ENCODE measurements at regions of chr2 and their contacts with region 1.

Region 1: DNA sequence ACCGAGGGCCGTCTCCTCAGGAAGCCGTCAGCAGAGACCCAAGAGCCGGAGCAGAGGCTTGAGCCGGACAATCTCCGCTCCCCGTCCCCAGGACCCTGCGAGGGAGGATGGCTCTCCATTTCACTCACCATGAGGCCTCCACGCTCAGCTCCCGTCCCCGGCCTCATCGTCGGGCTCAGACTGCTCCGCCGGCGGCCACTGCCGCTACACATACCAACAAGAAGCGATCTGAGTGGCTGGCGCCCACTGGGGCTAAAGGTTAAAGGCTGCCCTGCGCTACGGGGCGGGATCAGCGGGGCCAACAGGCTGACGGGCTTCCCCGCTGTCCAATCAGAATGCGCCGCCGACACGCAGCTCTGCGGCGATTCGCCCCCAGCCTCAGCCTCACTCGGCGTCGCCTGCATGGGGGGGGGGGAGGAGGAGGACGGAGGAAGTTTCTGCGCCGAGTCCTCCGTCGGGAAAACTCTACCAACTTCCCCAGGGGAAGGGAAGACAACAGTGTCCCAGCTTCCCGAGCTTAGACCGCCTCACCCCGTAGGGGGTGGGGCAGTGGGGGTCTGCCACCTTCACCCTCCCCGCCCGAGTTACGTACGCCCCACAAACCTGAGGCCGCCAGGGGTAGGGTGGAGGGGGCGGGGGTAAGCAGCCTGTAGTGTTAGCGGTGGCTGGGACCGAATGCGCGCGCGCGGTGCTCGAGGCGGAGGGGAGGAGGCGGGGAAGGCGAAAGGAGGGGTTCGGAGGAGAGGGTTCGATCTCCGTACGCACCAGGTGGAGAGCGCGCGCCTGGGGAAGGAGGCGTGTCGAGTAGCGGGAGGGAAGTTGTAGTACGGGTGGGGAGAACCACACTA is at the start of gene PRPF40A:
- DNase-seq: peak; percentile 98
- H3K4me3 ChIP-seq: peak within 1 kb of the TSS; percentile 79 to 87
- H3K27ac ChIP-seq: peak within 1 kb of the TSS; percentile 97 to 98
- H3K4me1 ChIP-seq: no peaks in the 10 kb centered on the region
- H3K27me3 ChIP-seq: no peaks in the 10 kb centered on the region
- CTCF ChIP-seq: peak in 2 of 4 experiments; percentile 31 to 46
- POLR2A ChIP-seq: peak; percentile 65
- total RNA-seq, gene PRPF40A: 82.6 to 97.9 TPM

Region 2: DNA sequence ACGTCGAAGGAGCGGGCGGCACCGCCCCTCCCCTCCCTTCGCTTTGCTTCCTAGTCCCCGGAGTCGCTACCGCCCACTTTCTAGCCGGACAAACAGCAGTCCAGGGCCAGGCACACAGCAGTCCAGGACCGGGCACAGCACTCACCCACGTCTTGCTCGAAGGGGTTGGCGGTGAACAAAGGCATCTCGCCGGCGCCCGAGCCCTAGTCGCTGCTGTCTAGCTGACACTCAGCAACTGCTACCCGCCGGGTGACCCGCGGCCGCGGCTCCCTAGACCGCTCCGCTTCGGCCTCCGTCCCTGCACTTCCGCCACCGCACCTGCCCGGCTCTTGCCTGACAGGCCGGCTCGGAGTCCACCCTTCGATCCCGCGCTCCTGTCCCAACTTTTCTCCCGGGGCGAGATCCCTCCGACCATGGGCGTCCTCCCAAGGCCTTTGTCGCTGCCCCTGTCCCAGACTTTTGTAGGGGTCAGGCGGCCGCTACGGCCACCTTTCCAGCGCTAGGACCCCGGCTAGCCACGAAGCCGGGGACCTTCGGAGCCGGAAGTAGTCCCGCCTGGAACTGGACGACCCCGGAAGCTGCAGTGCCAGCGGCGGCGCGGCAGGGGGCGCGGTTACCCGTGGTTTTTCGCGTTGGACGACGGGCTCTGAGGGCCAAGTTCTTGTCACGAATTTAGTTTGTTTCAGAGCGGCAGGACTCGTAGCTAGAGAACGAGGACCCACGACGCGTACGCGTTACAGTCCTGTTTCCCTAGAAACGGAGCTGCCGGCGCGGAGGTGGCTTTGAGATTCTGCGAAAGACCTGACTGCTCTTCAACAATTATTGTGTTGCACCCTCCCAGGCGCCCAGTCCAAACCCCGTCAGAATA is 541.8 kb before region 1 on chr2 and contains the start of gene STAM2:
- intact Hi-C with region 1: loop called (anchors 10 kb)
- DNase-seq: peak; percentile 92
- H3K4me3 ChIP-seq: peak within 1 kb of the TSS; percentile 67 to 75
- H3K27ac ChIP-seq: peak within 1 kb of the TSS; percentile 97
- H3K4me1 ChIP-seq: no peaks in the 10 kb centered on the region
- H3K27me3 ChIP-seq: no peaks in the 10 kb centered on the region
- CTCF ChIP-seq: peak; percentile 93 to 98 (median 96)
- POLR2A ChIP-seq: peak; percentile 82
- total RNA-seq, gene STAM2: 28.7 to 39.3 TPM

Region 3: DNA sequence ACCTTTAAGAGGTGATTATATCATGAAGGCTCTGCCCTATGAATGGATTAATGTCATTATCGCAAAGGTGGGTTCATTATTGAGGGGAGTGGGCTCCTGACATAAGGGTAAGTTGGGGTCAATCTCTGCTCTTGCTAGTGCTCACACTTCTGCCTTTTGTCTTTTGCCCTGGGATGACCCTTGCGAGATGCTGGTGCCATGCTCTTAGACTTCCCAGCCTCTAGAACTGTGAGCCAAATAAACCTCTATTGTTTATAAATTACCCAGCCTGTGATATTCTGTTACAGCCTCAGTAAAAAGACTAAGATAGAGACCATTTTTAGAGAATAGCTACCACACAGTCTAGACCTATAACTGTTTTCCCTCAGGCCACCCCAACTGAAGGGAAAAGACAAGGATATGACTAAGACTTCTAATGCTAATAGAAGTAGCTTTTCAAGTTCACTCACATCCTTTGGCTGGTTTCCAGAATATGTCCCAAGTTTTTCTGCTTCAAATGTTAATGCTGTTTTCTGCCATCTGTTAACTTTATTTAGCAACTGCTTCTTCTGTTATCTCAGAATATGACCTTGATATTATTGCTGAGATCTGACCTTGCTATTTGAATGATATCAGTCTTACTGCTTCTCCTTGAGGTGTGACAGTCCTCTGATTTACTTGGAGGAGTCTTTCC is 476.8 kb before region 1 on chr2:
- intact Hi-C with region 1: no loop called
- DNase-seq: no peak
- H3K4me3 ChIP-seq: no peak overlapping the region
- H3K27ac ChIP-seq: no peak overlapping the region
- H3K4me1 ChIP-seq: no peaks in the 10 kb centered on the region
- H3K27me3 ChIP-seq: no peaks in the 10 kb centered on the region
- CTCF ChIP-seq: no peak
- POLR2A ChIP-seq: no peak

Region 4: DNA sequence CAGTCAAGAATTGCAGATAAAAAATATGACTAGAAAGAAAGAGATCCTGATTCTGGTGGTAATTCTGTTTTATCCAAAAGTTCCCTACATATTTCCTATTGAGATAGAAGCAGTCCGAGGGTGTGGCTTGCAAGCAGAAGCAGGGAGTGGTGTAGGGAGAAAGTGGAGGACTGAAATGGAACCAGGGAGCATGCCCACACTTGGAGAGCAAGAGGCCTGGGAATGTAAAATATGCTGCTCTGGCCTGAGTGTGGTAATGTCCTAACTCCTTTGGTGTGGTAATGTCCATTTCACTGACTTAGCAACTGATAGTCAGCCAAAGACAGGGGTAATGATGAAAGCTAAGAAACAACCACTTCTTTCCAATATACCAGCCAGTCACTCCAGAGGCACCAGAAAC is 412.6 kb before region 1 on chr2:
- intact Hi-C with region 1: no loop called
- DNase-seq: no peak
- H3K4me3 ChIP-seq: no peak overlapping the region
- H3K27ac ChIP-seq: no peak overlapping the region
- H3K4me1 ChIP-seq: no peaks in the 10 kb centered on the region
- H3K27me3 ChIP-seq: no peaks in the 10 kb centered on the region
- CTCF ChIP-seq: no peak
- POLR2A ChIP-seq: no peak

Region 5: DNA sequence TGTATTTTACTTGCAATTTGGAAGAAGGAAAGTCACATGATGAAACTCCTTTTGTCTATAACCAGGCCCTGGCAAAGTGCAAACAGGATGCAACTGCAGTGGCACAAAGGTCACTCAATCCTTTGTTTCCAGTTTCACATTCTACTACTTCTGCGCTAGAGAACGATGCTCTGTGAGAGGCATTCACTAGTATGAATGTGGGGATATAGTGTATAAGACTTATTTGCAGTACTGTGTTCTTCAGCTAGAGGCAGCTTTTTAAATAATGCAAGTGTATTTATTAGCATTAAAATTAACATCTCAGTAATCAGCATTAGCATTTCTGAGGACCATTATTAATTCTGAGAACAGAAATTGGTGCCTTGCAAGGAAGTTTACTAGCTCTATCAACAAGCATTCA is 69.1 kb before region 1 on chr2:
- intact Hi-C with region 1: loop called (anchors 5 kb)
- DNase-seq: no peak
- H3K4me3 ChIP-seq: no peak overlapping the region
- H3K27ac ChIP-seq: no peak overlapping the region
- H3K4me1 ChIP-seq: peaks cover 16% of the 10 kb centered on the region
- H3K27me3 ChIP-seq: no peaks in the 10 kb centered on the region
- CTCF ChIP-seq: peak in 2 of 4 experiments; percentile 32 to 37
- POLR2A ChIP-seq: no peak

Measured in prostate gland (tissue), 2 donors.